Spleen (tissue), 13 donors: ENCODE measurements at regions of chr19 and their contacts with region 1.

Region 1: GRCh38 chr19:35716801-35717666 is 769 bp upstream of the KMT2B start:
- DNase-seq: peak; percentile 99
- H3K4me3 ChIP-seq: peak overlapping the region; percentile 75 to 97 (median 88)
- H3K27ac ChIP-seq: peak overlapping the region; percentile 88 to 98 (median 92)
- H3K4me1 ChIP-seq: peaks cover 32 to 89% (median 63%) of the 10 kb centered on the region in 6 donors
- H3K27me3 ChIP-seq: no peaks in the 10 kb centered on the region
- CTCF ChIP-seq: peak; percentile 83 to 97 (median 92)
- POLR2A ChIP-seq: no peak

Region 2: GRCh38 chr19:35557539-35558399 is 159.3 kb before region 1 on chr19:
- intact Hi-C with region 1: loop called (anchors 10 kb)
- DNase-seq: peak; percentile 81
- H3K4me3 ChIP-seq: peak overlapping the region; percentile 10 to 67 (median 28)
- H3K27ac ChIP-seq: no peak overlapping the region
- H3K4me1 ChIP-seq: peaks cover 5 to 23% (median 16%) of the 10 kb centered on the region in 6 donors
- H3K27me3 ChIP-seq: peaks cover 0 to 67% (median 29%) of the 10 kb centered on the region in 7 donors
- CTCF ChIP-seq: no peak
- POLR2A ChIP-seq: no peak

Region 3: GRCh38 chr19:35797663-35798062 is 80.6 kb after region 1 on chr19:
- intact Hi-C with region 1: no loop called
- DNase-seq: no peak
- H3K4me3 ChIP-seq: peak overlapping the region in 2 of 8 donors; percentile 17 to 52
- H3K27ac ChIP-seq: no peak overlapping the region
- H3K4me1 ChIP-seq: peaks cover 0 to 10% (median 0%) of the 10 kb centered on the region in 6 donors
- H3K27me3 ChIP-seq: peaks cover 0 to 56% (median 10%) of the 10 kb centered on the region in 7 donors
- CTCF ChIP-seq: no peak
- POLR2A ChIP-seq: no peak